ENCODE measurements at regions of chr6 and their contacts with region 1.

Region 1: DNA sequence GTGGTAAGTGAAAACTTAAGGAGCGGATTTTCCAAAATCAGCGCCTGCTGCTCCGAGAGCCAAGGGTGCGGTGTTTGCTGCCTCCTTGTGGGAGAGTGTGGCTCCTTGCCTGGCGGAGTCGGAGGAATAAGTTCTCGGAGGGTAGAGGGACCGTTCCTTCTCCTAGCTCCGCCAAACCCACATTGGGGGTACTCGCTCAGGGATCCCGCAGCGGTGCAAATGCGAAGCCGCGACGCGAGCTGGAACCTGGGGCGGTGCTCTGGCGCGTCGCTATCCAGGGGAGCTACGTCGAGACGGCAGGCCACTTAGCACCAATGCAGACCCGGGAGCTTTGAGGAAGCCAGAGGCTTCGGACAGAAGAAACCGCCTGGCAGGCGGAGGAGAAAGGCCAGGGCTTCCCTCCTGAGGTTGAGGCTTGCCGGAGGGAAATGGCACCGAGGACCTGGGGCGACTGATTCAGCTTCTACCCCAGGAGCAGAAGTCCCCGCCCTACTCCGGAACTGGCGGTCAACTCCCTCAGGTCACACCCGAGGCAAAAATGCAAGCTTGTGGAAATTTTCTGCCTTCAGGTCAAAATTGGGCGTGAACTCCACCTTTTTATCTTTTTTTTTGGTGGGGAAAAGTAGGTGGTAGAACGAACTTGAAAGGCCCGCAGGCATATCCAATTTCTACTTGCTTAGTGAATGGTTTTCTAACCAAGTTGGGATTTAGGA is 5.7 kb upstream of the DDX43 start:
- DNase-seq: peak; percentile 47 to 75
- ATAC-seq: peak; percentile 98 to 99
- H3K4me3 ChIP-seq: peak overlapping the region; percentile 59
- H3K27ac ChIP-seq: peak overlapping the region; percentile 79 to 96
- H3K4me1 ChIP-seq: 0 out of 3 replicates have a peak, but pooled peaks cover 3% of the 10 kb centered on the region
- CTCF ChIP-seq: peak; percentile 63
- EP300 ChIP-seq: no peak
- POLR2A ChIP-seq: peak; percentile 41
- RAD21 ChIP-seq: peak; percentile 77 to 78

Region 2: DNA sequence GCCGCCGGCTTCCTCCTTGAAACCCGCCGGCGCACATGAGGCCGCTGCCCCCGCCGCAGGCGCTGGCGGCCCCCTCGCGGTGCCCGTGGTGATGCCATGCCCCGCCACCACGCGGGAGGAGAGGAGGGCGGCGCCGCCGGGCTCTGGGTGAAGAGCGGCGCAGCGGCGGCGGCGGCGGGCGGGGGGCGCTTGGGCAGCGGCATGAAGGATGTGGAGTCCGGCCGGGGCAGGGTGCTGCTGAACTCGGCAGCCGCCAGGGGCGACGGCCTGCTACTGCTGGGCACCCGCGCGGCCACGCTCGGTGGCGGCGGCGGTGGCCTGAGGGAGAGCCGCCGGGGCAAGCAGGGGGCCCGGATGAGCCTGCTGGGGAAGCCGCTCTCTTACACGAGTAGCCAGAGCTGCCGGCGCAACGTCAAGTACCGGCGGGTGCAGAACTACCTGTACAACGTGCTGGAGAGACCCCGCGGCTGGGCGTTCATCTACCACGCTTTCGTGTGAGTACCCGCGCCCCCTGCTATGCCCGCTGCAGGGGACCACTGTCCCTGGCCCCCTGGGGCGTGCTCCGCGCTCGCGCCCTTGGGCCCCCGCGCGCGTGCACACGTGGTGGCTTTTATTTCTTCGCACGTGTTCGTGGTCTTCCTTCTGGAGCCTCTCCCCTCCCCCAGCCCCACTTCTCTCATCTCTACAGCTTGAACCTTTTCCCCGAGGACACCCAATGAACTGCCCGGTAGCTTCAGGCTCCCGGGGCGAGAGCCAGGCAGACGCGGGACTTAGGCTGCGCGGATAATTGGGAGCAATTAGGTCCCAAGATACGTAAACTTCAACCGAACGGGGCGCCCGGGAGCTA is 766.6 kb before region 1 on chr6:
- CTCF ChIA-PET with region 1: no interaction called
- POLR2A ChIA-PET with region 1: no interaction called
- DNase-seq: peak; percentile 22 to 36
- ATAC-seq: peak; percentile 83 to 91
- H3K4me3 ChIP-seq: peak overlapping the region; percentile 72
- H3K27ac ChIP-seq: peak overlapping the region; percentile 71 to 89
- H3K4me1 ChIP-seq: peaks cover 6% of the 10 kb centered on the region; the same call in 1 of the 3 replicates
- CTCF ChIP-seq: no peak; the same call in 2 of the 3 replicates
- EP300 ChIP-seq: no peak
- POLR2A ChIP-seq: no peak
- RAD21 ChIP-seq: no peak

Region 3: GRCh38 chr6:73285674-73286283 is 103.2 kb before region 1 on chr6:
- CTCF ChIA-PET with region 1: interaction called, 16 read pairs
- POLR2A ChIA-PET with region 1: no interaction called
- DNase-seq: peak; percentile 47 to 51
- ATAC-seq: peak; percentile 74 to 88; a peak in 5 of 6 replicates
- H3K4me3 ChIP-seq: no peak overlapping the region
- H3K27ac ChIP-seq: no peak overlapping the region
- H3K4me1 ChIP-seq: no peaks in the 10 kb centered on the region
- CTCF ChIP-seq: peak; percentile 41; the same call in 2 of the 3 replicates
- EP300 ChIP-seq: no peak
- POLR2A ChIP-seq: no peak
- RAD21 ChIP-seq: peak; percentile 28 to 46; a peak in 4 of 5 replicates

Region 4: DNA sequence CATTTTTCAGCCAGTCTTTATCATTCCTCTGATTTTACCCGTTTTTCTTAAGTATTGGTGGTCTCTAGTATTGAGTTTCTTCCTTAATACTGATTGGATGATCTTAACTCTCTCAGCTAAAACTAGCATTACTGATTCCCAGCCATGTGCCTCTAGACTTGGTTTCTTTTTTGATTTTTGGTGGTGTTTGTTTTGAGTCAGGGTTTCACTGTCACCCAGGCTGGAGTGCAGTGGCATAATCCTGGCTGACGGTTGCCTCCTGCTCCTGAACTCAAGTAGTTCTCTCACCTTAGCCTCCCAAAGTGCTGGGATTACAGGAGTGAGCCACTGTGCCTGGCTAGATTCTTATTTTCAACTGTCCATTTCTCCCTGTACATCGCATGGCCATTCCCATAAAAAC is 59.8 kb before region 1 on chr6:
- CTCF ChIA-PET with region 1: interaction called, 10 read pairs
- POLR2A ChIA-PET with region 1: no interaction called
- DNase-seq: no peak
- ATAC-seq: no peak
- H3K4me3 ChIP-seq: no peak overlapping the region
- H3K27ac ChIP-seq: no peak overlapping the region
- H3K4me1 ChIP-seq: no peaks in the 10 kb centered on the region
- CTCF ChIP-seq: no peak
- EP300 ChIP-seq: no peak
- POLR2A ChIP-seq: no peak
- RAD21 ChIP-seq: no peak

Region 5: DNA sequence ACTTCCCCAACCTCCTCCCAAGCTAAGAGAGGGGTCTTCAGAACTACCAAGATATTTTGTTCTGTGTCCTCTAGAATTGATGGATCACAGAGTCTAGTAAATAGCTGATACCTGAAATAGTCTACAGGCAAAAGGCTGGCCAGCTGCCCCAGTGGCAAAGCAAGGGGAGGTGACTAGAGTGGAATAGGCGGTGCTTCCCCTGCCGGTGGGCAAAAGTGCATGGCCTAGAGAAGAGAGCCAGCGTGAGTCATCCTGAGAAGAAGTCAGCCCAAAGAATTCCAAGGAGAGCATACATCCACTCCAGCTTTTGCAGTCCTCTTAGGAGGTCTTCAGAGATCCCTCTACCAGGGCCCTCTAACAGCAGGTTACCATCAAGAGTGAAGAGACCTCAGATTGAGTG is 49.6 kb before region 1 on chr6:
- CTCF ChIA-PET with region 1: interaction called, 12 read pairs
- POLR2A ChIA-PET with region 1: no interaction called
- DNase-seq: peak in 1 of 2 experiments; percentile 10
- ATAC-seq: peak; percentile 59 to 77; a peak in 4 of 6 replicates
- H3K4me3 ChIP-seq: no peak overlapping the region
- H3K27ac ChIP-seq: no peak overlapping the region
- H3K4me1 ChIP-seq: 0 out of 3 replicates have a peak, but pooled peaks cover 4% of the 10 kb centered on the region
- CTCF ChIP-seq: no peak
- EP300 ChIP-seq: no peak
- POLR2A ChIP-seq: no peak
- RAD21 ChIP-seq: no peak

Region 6: GRCh38 chr6:73375216-73375615 is 13.7 kb before region 1 on chr6:
- CTCF ChIA-PET with region 1: interaction called, 13 read pairs
- POLR2A ChIA-PET with region 1: no interaction called
- DNase-seq: peak in 1 of 2 experiments; percentile 26
- ATAC-seq: peak; percentile 66 to 72; a peak in 5 of 6 replicates
- H3K4me3 ChIP-seq: no peak overlapping the region
- H3K27ac ChIP-seq: peak overlapping the region in 1 of 2 experiments; percentile 39; a peak in 1 of 6 replicates
- H3K4me1 ChIP-seq: peaks cover 8% of the 10 kb centered on the region; the same call in 2 of the 3 replicates
- CTCF ChIP-seq: no peak
- EP300 ChIP-seq: no peak
- POLR2A ChIP-seq: no peak
- RAD21 ChIP-seq: no peak